WTC11 (cell line): ENCODE measurements at regions of chr1 and their contacts with region 1.

Region 1: GRCh38 chr1:67214420-67215174 is 48.3 kb downstream of the IL23R start:
- DNase-seq: peak; percentile 29
- ATAC-seq: no peak; the same call in 1 of the 2 replicates
- H3K4me3 Mint-ChIP-seq: no peak overlapping the region
- H3K27ac Mint-ChIP-seq: no peak overlapping the region
- H3K4me1 Mint-ChIP-seq: peaks cover 9% of the 10 kb centered on the region
- H3K27me3 Mint-ChIP-seq: no peaks in the 10 kb centered on the region
- CTCF ChIP-seq: no peak; the same call in 1 of the 2 replicates

Region 2: DNA sequence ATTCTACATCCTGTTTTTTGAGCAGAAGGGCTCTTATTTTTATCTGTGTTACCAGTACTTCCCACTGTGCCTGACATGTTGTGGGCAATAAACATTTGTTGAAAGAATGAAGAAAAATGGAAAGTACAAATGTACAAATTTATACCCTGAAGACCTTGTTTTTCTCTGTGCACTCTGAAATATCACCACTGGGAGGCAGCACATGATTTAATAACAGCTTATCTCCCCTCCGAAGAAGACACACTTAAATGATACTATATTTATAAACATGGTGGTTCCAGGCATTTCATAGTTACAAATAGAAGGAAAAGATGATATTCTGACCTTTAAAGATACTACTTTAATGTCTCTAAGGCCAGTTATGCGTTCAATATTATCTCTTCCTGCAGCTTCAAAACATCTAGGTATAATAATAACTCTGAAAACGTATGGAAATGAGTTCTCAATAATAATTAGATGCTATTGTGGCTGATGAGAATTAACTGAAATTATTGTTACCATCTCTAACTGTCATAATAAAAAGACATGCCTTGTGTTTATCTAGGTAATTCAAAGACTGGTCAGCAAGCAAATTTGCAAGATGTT is 449.5 kb before region 1 on chr1:
- CTCF ChIA-PET with region 1: interaction called, 20 read pairs
- POLR2A ChIA-PET with region 1: no interaction called
- DNase-seq: peak; percentile 16
- ATAC-seq: peak; percentile 34; the same call in 1 of the 2 replicates
- H3K4me3 Mint-ChIP-seq: no peak overlapping the region
- H3K27ac Mint-ChIP-seq: no peak overlapping the region
- H3K4me1 Mint-ChIP-seq: no peaks in the 10 kb centered on the region
- H3K27me3 Mint-ChIP-seq: no peaks in the 10 kb centered on the region
- CTCF ChIP-seq: peak; percentile 35; the same call in 1 of the 2 replicates

Region 3: DNA sequence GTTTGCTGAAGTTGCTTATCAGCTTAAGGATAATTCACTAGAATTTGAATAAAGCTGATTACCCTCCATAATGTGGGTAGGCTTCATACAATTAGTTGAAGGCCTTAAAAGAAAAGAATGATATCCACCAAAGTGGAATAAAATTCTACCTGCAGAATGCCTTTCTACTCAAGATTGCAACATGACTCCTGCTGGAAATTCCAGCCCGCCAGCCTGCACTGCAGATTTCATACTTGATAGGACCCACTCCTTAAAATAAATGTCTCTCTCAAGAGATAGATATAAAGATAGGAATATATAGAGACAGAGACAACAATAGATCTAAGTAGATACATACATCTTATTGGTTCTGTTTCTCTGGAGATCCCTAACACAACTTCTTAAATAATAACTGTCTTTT is 389.8 kb before region 1 on chr1:
- CTCF ChIA-PET with region 1: no interaction called
- POLR2A ChIA-PET with region 1: no interaction called
- DNase-seq: no peak
- ATAC-seq: no peak
- H3K4me3 Mint-ChIP-seq: no peak overlapping the region
- H3K27ac Mint-ChIP-seq: no peak overlapping the region
- H3K4me1 Mint-ChIP-seq: no peaks in the 10 kb centered on the region
- H3K27me3 Mint-ChIP-seq: no peaks in the 10 kb centered on the region
- CTCF ChIP-seq: no peak

Region 4: DNA sequence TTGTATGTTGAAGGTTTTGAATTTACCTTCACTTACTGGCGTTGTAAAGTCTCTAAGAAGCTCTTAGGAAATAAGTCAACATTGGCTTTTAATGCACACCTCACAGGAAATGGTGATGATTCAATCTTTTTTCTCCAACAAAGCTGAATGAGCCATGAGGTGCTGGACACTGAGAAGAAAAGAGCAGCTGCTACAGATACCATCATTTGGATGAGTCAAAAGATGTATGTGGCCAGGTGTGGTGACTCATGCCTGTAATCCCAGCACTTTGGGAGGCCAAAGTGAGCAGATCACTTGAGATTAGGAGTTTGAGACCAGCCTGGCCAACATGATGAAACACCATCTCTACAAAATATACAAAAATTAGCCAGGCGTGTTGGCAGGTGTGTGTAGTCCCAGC is 51.6 kb before region 1 on chr1:
- CTCF ChIA-PET with region 1: interaction called, 14 read pairs
- POLR2A ChIA-PET with region 1: no interaction called
- DNase-seq: no peak
- ATAC-seq: no peak
- H3K4me3 Mint-ChIP-seq: no peak overlapping the region
- H3K27ac Mint-ChIP-seq: no peak overlapping the region
- H3K4me1 Mint-ChIP-seq: no peaks in the 10 kb centered on the region
- H3K27me3 Mint-ChIP-seq: no peaks in the 10 kb centered on the region
- CTCF ChIP-seq: no peak

Region 5: DNA sequence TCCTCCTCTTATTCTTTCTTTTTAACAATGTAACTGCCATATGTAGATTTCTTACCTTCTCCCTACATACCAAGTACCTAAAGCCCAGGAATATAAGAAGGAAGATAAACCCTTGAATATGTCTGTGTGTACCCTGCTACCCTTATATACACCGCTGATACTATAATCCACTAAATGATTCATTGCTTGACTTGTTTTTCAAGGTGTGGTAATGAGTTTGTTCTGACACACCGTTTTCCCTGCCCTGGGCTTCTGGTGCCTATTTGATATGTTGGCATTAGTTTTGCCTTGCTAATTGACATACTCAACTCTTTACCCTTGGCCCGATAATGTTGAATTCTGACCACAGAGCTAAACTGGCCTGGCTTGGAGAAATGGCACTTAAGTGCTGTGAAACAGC is 15.9 kb after region 1 on chr1:
- CTCF ChIA-PET with region 1: interaction called, 20 read pairs
- POLR2A ChIA-PET with region 1: no interaction called
- DNase-seq: no peak
- ATAC-seq: no peak
- H3K4me3 Mint-ChIP-seq: no peak overlapping the region
- H3K27ac Mint-ChIP-seq: no peak overlapping the region
- H3K4me1 Mint-ChIP-seq: no peaks in the 10 kb centered on the region
- H3K27me3 Mint-ChIP-seq: peaks cover 3% of the 10 kb centered on the region
- CTCF ChIP-seq: no peak

Region 6: GRCh38 chr1:67332653-67333529 is 118.3 kb after region 1 on chr1:
- CTCF ChIA-PET with region 1: interaction called, 43 read pairs
- POLR2A ChIA-PET with region 1: interaction called, 5 read pairs
- DNase-seq: no peak
- ATAC-seq: no peak
- H3K4me3 Mint-ChIP-seq: no peak overlapping the region
- H3K27ac Mint-ChIP-seq: no peak overlapping the region
- H3K4me1 Mint-ChIP-seq: peaks cover 24% of the 10 kb centered on the region
- H3K27me3 Mint-ChIP-seq: peaks cover 8% of the 10 kb centered on the region
- CTCF ChIP-seq: no peak

Region 7: DNA sequence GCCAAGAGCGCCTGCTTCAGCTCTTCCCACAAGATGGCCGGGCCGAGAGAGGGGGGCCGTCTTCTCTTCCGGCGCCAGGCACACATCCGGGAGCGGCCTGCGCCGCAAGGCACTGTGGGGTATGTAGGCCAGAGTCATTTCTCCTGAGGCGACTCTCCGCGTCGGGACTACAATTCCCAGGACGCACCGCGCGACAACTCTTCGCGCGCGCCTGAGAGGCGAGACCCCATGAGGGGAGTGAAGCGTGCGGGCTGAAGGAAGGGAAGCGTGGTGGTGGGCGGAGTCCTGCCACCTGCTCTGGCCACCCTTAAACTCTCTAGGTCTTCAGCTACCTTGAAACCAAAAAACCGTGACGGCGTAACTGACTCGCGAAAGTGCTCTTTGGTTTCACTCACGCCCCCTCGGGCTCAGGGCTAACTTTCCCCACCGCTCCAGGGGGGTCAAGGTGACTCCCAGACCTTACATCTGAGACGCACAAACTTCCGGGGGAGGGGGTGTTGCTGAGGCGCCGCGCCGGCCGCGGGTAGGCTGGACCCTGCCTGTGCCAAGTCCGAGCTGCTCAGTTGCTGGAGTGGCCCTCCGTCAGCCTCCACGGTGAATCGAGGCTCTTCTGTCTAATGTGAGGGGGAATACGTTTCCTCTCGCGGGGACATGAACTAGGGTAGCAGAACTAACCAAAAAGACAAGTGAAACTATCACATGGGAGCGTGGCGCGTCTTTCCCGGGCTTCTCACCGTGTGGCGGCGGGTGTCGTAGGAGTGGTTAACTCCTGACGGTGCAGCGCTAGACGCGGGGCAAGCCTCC is 216.0 kb after region 1 on chr1 and contains the start of gene SERBP1:
- CTCF ChIA-PET with region 1: interaction called, 18 read pairs
- POLR2A ChIA-PET with region 1: no interaction called
- DNase-seq: peak; percentile 97
- ATAC-seq: peak; percentile 94
- H3K4me3 Mint-ChIP-seq: peak within 1 kb of the TSS; percentile 100
- H3K27ac Mint-ChIP-seq: peak within 1 kb of the TSS; percentile 99
- H3K4me1 Mint-ChIP-seq: peaks cover 41% of the 10 kb centered on the region
- H3K27me3 Mint-ChIP-seq: no peaks in the 10 kb centered on the region
- CTCF ChIP-seq: no peak
- total RNA-seq, gene SERBP1: 531 to 543 TPM (median 533 TPM) in 3 replicates